ENCODE measurements at regions of chr5 and their contacts with region 1.

Region 1: DNA sequence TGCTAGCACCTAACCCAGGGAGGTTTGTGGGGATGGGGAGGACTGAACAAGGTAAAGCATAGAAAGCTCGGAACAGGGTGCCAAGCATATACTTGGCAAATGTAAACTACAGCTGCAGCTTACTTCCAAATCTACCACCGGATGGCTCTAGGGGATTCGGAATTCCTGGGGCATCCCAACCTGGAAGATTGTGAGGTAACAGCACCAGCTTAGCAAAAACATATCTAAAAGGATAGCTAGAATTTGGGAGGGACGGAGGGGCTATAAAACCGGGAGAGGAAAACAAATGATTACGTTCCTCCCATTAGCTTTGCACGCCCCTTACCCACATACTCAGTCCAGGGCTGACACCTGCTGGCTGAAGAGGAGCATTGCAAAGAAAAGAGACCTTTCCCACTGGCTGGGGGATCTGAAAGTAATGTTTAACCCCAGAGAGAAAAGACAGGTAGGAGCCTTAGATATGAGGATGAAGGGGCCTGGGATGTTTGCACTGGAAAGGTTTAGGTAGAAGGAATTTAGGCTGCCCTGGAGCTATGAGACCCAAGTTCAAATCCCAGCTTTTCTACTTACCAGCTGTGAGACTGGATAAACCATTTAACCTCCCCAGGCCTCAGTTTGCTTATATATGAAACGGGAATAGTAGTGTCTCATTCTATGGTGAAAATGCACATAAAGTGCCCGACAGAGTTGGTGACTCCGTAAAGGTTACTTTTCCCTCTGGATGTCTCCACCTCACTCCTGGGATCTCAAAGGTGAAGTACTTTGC is 73.6 kb downstream of the FAM114A2 start:
- DNase-seq: peak in 2 of 4 donors; percentile 51 to 71
- ATAC-seq: peak; percentile 97
- H3K4me3 ChIP-seq: no peak overlapping the region
- H3K27ac ChIP-seq: no peak overlapping the region
- H3K4me1 ChIP-seq: no peaks in the 10 kb centered on the region
- H3K27me3 ChIP-seq: no peaks in the 10 kb centered on the region
- CTCF ChIP-seq: peak; percentile 81

Region 2: DNA sequence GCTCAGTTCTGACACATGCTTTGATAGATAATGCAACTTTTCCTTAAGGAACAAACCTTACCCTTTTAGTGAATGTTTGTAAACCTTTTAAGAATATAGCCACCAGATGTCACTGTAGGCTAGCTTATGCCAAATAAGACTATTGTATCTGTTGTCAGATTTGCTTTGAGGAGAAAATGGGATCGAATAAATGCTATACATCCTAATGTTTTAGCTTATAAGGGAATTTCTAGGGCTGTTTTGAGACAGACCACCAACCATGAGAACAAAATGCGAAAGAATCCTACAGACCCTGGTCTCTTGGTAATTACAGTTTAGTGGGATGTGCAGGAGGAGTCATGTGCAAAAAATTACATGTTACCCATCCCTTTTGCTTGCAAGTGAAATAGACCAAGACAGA is 1432.3 kb before region 1 on chr5:
- intact Hi-C with region 1: loop called in 1 of 2 experiments (anchors 5 kb)
- DNase-seq: peak in 1 of 4 donors; percentile 72
- ATAC-seq: peak; percentile 73
- H3K4me3 ChIP-seq: no peak overlapping the region
- H3K27ac ChIP-seq: no peak overlapping the region
- H3K4me1 ChIP-seq: peaks cover 0 to 3% of the 10 kb centered on the region in 2 donors
- H3K27me3 ChIP-seq: no peaks in the 10 kb centered on the region
- CTCF ChIP-seq: peak; percentile 27 to 40

Region 3: GRCh38 chr5:153400931-153401330 is 564.1 kb before region 1 on chr5:
- intact Hi-C with region 1: no loop called
- DNase-seq: no peak
- ATAC-seq: no peak
- H3K4me3 ChIP-seq: no peak overlapping the region
- H3K27ac ChIP-seq: no peak overlapping the region
- H3K4me1 ChIP-seq: no peaks in the 10 kb centered on the region
- H3K27me3 ChIP-seq: no peaks in the 10 kb centered on the region
- CTCF ChIP-seq: no peak

Region 4: DNA sequence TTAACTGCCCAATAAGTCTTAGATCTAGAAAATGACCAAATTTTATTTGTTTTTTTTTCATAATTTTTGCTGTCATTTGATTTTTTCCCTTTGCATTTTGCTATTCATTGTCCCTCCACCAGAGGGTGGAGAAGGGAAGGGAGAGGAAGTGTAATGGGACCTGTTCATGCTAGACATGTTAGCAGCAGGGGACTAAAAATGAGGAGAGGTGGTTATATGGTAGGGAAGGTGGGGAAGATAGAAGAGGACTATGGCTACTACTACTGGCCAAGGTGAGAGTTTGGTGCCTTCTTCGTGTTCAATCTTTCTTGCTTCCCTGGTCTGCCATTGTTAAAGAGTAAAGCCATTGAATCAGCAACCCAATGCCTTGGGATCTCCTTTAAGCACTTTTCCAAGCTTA is 468.2 kb before region 1 on chr5:
- intact Hi-C with region 1: loop called in 1 of 2 experiments (anchors 5 kb)
- DNase-seq: peak in 1 of 4 donors; percentile 30
- ATAC-seq: peak; percentile 83
- H3K4me3 ChIP-seq: no peak overlapping the region
- H3K27ac ChIP-seq: no peak overlapping the region
- H3K4me1 ChIP-seq: no peaks in the 10 kb centered on the region
- H3K27me3 ChIP-seq: peaks cover 0 to 4% of the 10 kb centered on the region in 2 donors
- CTCF ChIP-seq: peak; percentile 54 to 66

Region 5: GRCh38 chr5:154179846-154180710 is 215.0 kb after region 1 on chr5:
- intact Hi-C with region 1: no loop called
- DNase-seq: peak in 2 of 4 donors; percentile 36 to 56
- ATAC-seq: peak; percentile 94
- H3K4me3 ChIP-seq: no peak overlapping the region
- H3K27ac ChIP-seq: no peak overlapping the region
- H3K4me1 ChIP-seq: no peaks in the 10 kb centered on the region
- H3K27me3 ChIP-seq: no peaks in the 10 kb centered on the region
- CTCF ChIP-seq: peak; percentile 71 to 85

Measured in left lung (tissue), 14 donors.